ENCODE measurements at regions of chr6 and their contacts with region 1.

Region 1: DNA sequence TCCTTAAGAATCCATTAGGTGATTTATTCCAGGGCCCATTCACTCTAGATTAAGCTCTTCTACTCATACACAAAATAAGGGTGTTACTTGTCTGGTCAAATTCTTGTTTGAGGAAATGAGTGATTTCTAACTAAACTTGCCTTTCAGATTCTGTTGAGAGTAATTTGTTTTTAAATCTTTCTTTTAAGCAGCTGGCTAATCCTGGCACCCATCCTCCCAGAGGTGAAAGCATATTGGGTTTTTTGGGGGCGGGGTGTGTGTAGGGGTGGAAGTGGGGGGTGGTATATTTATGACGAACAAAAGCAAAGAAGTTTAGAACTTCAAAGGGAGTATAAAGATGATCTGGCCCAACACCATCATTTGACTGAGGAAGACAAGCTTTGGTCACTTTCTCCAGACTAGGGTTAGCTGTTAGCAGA is 94.7 kb downstream of the RTN4IP1 start:
- DNase-seq: peak; percentile 72
- ATAC-seq: peak; percentile 79
- H3K4me3 Mint-ChIP-seq: no peak overlapping the region
- H3K27ac Mint-ChIP-seq: peak overlapping the region; percentile 78
- H3K4me1 Mint-ChIP-seq: peaks cover 80% of the 10 kb centered on the region
- H3K27me3 Mint-ChIP-seq: no peaks in the 10 kb centered on the region

Region 2: DNA sequence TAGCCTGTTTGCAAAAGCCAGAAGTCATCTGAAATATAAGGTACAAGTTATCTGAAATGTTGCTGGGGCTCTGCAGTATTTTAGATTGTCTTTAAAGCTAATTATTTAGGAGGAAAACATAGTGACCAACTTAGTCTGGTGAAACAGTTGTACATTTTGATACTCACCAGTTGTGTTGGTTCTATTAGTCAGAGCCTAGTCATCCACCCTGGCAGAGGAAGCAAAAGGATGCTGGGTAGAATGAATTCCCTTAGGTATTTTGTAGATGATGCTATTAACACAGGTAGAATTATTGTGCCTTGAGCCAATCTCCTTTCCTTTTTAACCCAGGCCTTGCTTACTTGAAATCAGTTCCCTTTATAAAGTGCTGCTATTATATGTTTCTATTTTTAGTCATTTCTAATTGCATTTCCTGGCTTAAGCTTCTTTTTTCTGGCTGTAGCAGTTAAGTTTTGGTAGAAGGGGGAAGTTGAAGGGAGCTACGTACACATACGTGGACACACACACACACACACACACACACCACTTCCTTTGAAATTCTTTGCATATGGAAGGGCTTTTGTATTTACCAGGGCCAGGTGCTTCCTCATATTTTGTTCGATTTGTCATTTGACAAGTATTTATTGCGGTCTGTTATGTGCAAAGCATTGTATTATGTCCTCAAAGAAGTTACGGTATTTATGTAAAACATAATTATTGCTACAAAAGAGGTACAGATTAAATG is 12.3 kb after region 1 on chr6:
- CTCF ChIA-PET with region 1: interaction called, 8 read pairs
- POLR2A ChIA-PET with region 1: interaction called, 3 read pairs
- intact Hi-C with region 1: loop called in 1 of 2 experiments (anchors 1 kb)
- DNase-seq: no peak
- ATAC-seq: peak; percentile 94
- H3K4me3 Mint-ChIP-seq: no peak overlapping the region
- H3K27ac Mint-ChIP-seq: peak overlapping the region; percentile 88
- H3K4me1 Mint-ChIP-seq: peaks cover 49% of the 10 kb centered on the region
- H3K27me3 Mint-ChIP-seq: no peaks in the 10 kb centered on the region

Measured in activated CD4-positive, alpha-beta T cell treated with anti-CD3 and anti-CD28 coated beads for 36 hours (primary cell).